Activated naive CD4-positive, alpha-beta T cell treated with anti-CD3 and anti-CD28 coated beads for 36 hours (primary cell): ENCODE measurements at regions of chr12 and their contacts with region 1.

Region 1: GRCh38 chr12:64431791-64432190 is 20.1 kb upstream of the TBK1 start:
- DNase-seq: no peak
- H3K4me3 Mint-ChIP-seq: no peak overlapping the region
- H3K27ac Mint-ChIP-seq: no peak overlapping the region
- H3K4me1 Mint-ChIP-seq: peaks cover 2% of the 10 kb centered on the region
- H3K27me3 Mint-ChIP-seq: no peaks in the 10 kb centered on the region

Region 2: GRCh38 chr12:64269171-64269570 is 162.6 kb before region 1 on chr12:
- CTCF ChIA-PET with region 1: no interaction called
- intact Hi-C with region 1: no loop called
- DNase-seq: no peak
- H3K4me3 Mint-ChIP-seq: no peak overlapping the region
- H3K27ac Mint-ChIP-seq: no peak overlapping the region
- H3K4me1 Mint-ChIP-seq: no peaks in the 10 kb centered on the region
- H3K27me3 Mint-ChIP-seq: no peaks in the 10 kb centered on the region

Region 3: DNA sequence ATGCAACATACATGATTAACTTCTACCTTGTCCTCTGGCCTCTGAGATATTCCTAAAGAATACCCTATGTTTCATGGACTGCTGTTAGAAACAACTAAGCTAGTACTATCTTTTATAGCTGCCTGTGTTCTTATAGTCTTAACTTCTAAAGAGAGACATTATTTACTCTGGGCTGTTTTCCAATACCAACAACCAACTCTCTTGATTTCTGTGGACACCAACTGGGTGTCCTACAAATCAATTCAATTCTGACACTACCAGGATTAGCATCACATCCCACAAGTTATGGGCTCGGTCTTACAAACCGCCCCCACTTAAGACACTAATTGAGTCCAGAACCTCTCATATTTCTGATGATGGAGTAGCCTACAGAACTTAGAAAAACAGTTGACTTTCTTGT is 19.3 kb before region 1 on chr12:
- CTCF ChIA-PET with region 1: interaction called, 5 read pairs
- intact Hi-C with region 1: loop called (anchors 2 kb)
- DNase-seq: no peak
- H3K4me3 Mint-ChIP-seq: no peak overlapping the region
- H3K27ac Mint-ChIP-seq: no peak overlapping the region
- H3K4me1 Mint-ChIP-seq: peaks cover 28% of the 10 kb centered on the region
- H3K27me3 Mint-ChIP-seq: no peaks in the 10 kb centered on the region

Region 4: DNA sequence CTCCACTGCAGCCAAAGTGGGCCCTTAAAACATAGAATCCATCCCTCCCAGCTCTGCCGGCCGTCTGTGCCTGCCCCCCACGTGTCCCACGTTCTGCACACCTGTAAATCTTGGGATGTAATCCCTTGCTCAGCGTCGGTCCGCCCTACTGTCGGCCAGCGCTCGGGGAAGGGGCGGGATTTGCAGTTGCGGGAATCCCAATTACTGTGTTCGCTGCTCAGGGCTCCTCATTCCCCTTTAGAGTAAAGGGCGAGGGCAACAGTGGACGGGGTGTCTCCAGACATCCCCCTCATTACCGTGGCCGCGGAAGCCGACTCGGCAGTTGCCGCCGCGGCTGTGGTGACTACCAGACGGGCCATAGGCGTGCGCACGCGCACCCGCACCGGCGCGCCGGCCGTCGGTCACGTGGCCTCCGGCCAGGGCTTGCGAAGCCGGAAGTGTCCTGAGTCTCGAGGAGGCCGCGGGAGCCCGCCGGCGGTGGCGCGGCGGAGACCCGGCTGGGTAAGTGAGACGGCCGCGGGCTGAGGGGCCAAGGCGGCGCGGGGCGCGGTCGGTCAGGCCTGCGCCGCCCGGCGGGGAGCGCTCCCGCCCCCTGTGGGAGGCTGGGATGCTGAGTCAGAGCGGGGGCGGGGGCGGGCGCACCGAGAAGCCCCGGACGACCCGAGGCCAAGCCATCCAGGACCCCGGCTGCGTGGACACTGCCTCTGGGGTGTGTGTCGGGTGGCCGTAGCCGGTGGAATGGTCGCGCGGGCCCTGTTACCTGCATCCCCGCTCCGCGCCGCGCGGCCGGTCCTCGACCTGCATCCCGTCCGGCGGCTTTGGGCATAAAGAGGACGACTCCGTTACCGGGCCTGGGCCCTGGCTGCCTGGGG is 20.1 kb after region 1 on chr12 and contains the start of gene TBK1:
- CTCF ChIA-PET with region 1: no interaction called
- intact Hi-C with region 1: no loop called
- DNase-seq: peak; percentile 45
- H3K4me3 Mint-ChIP-seq: peak within 1 kb of the TSS; percentile 94
- H3K27ac Mint-ChIP-seq: peak within 1 kb of the TSS; percentile 94
- H3K4me1 Mint-ChIP-seq: peaks cover 41% of the 10 kb centered on the region
- H3K27me3 Mint-ChIP-seq: no peaks in the 10 kb centered on the region
- total RNA-seq, gene TBK1: 10.7 to 12.1 TPM